Tibial artery (tissue), 4 donors: ENCODE measurements at regions of chr7 and their contacts with region 1.

Region 1: GRCh38 chr7:90403174-90404113 is at the start of gene CLDN12:
- DNase-seq: peak; percentile 89 to 93
- H3K4me3 ChIP-seq: peak within 1 kb of the TSS; percentile 71 to 73
- H3K27ac ChIP-seq: peak within 1 kb of the TSS; percentile 90 to 92
- H3K4me1 ChIP-seq: peaks cover 0 to 18% (median 12%) of the 10 kb centered on the region in 4 donors
- H3K27me3 ChIP-seq: no peaks in the 10 kb centered on the region
- CTCF ChIP-seq: no peak

Region 2: DNA sequence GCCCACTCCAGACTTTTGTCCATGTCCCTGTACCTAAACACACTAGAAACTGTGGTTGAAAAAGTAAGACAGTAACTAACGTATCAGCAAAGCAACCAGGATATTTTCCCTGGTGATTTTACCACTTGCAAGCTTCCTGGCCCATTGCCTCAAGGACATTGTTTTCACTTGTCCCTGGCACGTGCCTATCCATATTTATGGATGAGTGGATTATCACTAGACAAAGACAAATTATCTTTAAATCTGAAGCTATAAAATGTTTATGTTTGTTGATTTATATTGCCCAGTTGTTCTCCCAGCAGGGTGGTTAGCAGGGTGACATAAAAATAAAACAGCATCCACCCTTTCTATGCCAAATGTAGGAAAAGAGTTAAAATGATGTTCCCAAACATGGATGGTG is 342.4 kb before region 1 on chr7:
- intact Hi-C with region 1: no loop called
- DNase-seq: no peak
- H3K4me3 ChIP-seq: no peak overlapping the region
- H3K27ac ChIP-seq: no peak overlapping the region
- H3K4me1 ChIP-seq: no peaks in the 10 kb centered on the region
- H3K27me3 ChIP-seq: no peaks in the 10 kb centered on the region
- CTCF ChIP-seq: no peak

Region 3: GRCh38 chr7:90346336-90347125 is 56.9 kb before region 1 on chr7 and contains the start of gene GTPBP10:
- intact Hi-C with region 1: loop called (anchors 5 kb)
- DNase-seq: peak; percentile 90 to 94
- H3K4me3 ChIP-seq: peak within 1 kb of the TSS; percentile 71 to 89
- H3K27ac ChIP-seq: peak within 1 kb of the TSS; percentile 85 to 90
- H3K4me1 ChIP-seq: peaks cover 0 to 15% (median 8%) of the 10 kb centered on the region in 4 donors
- H3K27me3 ChIP-seq: no peaks in the 10 kb centered on the region
- CTCF ChIP-seq: peak; percentile 66